ENCODE measurements at regions of chr3 and their contacts with region 1.

Region 1: DNA sequence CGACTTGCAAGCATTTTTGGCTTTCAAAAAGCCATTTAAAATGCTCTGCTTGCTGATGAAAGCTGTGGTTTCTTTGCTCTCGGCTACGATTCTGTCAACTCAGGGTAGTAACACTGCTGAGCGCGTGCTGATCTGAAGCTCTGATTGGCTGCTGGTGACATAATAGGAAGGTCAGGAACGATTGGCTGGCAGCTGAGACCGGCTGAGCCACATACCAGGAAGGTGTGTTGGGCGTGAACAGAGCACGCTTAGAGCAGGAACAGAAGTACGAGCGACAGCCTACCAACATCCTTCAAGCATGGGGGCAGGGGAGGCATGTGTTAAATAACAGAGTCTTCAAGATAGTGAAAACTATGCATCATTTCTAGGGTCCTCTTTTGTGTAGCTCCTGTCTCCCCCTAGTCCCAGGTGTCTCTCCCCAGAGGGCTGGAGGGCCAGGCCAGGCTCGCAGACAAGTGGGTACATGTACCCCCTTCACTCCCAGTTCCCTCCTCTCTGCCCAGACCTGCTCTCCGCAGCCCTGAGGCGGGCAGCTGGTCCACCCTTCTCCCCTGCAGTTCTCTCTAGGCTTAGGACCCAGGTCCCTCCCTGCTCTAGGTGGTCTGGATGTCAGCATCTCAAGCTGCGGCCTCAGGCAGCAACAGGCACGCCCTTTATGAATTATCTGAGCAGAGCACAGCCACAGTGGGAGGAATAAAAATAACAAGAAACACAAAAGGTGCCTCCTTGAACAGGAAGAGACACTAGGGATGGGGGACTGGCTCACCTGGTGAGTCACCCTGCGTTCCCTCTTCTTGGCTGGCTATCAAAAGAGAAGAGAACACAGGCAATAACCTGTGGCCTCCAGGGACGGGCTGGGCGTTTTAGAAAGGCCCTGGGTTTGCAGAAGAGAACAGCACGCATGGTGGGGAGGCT is 76.0 kb downstream of the TAMM41 start:
- DNase-seq: peak; percentile 85
- H3K4me3 ChIP-seq: no peak overlapping the region
- H3K27ac ChIP-seq: no peak overlapping the region
- H3K4me1 ChIP-seq: peaks cover 11% of the 10 kb centered on the region
- H3K27me3 ChIP-seq: no peaks in the 10 kb centered on the region
- CTCF ChIP-seq: no peak
- POLR2A ChIP-seq: no peak

Region 2: GRCh38 chr3:11662402-11662990 is 108.2 kb before region 1 on chr3:
- CTCF ChIA-PET with region 1: interaction called, 6 read pairs
- POLR2A ChIA-PET with region 1: no interaction called
- dilution Hi-C with region 1: no loop called
- intact Hi-C with region 1: loop called (anchors 2 kb)
- DNase-seq: peak; percentile 31
- H3K4me3 ChIP-seq: no peak overlapping the region
- H3K27ac ChIP-seq: no peak overlapping the region
- H3K4me1 ChIP-seq: peaks cover 12% of the 10 kb centered on the region
- H3K27me3 ChIP-seq: no peaks in the 10 kb centered on the region
- CTCF ChIP-seq: peak; percentile 33 to 43
- POLR2A ChIP-seq: no peak

Region 3: GRCh38 chr3:11785024-11785377 is 14.3 kb after region 1 on chr3:
- CTCF ChIA-PET with region 1: interaction called, 12 read pairs
- POLR2A ChIA-PET with region 1: no interaction called
- dilution Hi-C with region 1: no loop called
- intact Hi-C with region 1: no loop called
- DNase-seq: no peak
- H3K4me3 ChIP-seq: no peak overlapping the region
- H3K27ac ChIP-seq: no peak overlapping the region
- H3K4me1 ChIP-seq: no peaks in the 10 kb centered on the region
- H3K27me3 ChIP-seq: no peaks in the 10 kb centered on the region
- CTCF ChIP-seq: no peak
- POLR2A ChIP-seq: no peak

Region 4: GRCh38 chr3:11835028-11835639 is 64.4 kb after region 1 on chr3:
- CTCF ChIA-PET with region 1: no interaction called
- POLR2A ChIA-PET with region 1: no interaction called
- dilution Hi-C with region 1: no loop called
- intact Hi-C with region 1: loop called (anchors 2 kb)
- DNase-seq: peak; percentile 49
- H3K4me3 ChIP-seq: no peak overlapping the region
- H3K27ac ChIP-seq: no peak overlapping the region
- H3K4me1 ChIP-seq: no peaks in the 10 kb centered on the region
- H3K27me3 ChIP-seq: no peaks in the 10 kb centered on the region
- CTCF ChIP-seq: peak; percentile 17 to 30
- POLR2A ChIP-seq: no peak

Region 5: DNA sequence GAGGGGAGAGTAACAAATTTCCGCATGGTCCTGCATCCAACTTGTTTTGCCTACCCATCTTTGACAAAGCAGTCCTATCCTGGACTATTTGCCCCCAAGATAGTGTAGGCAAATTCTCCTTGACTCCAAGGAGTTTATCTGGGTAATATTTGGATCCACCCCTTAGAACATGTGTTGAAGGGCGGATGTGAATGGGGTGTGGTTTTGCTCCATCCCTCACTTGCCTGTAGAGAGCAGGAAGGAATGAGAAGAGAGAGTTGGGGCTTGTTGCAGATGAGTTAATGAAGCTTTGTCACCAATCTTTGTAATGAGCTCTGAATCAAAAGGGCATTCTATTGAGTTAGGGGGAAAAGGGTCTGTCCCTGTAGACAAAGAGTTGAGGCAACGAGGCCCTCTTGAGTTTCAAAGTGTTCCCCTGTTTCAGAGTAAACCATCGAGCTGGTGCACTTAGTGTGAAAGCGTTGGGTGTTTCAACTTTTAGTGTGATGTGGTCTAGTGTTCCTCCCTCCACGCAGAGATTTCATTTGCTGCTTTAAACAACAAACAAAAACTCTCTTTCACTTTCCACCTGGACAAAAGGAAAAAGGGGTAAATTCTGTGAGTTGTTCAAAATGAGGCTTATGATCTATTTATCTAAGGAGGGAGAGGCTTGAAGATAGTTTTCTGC is 475.9 kb after region 1 on chr3:
- CTCF ChIA-PET with region 1: no interaction called
- POLR2A ChIA-PET with region 1: no interaction called
- dilution Hi-C with region 1: no loop called
- intact Hi-C with region 1: no loop called
- DNase-seq: no peak
- H3K4me3 ChIP-seq: no peak overlapping the region
- H3K27ac ChIP-seq: no peak overlapping the region
- H3K4me1 ChIP-seq: no peaks in the 10 kb centered on the region
- H3K27me3 ChIP-seq: peaks cover 7 to 15% of the 10 kb centered on the region in 2 experiments
- CTCF ChIP-seq: no peak
- POLR2A ChIP-seq: no peak

Measured in endothelial cell of umbilical vein (primary cell).